H1 (cell line): ENCODE measurements at regions of chr9 and their contacts with region 1.

Region 1: DNA sequence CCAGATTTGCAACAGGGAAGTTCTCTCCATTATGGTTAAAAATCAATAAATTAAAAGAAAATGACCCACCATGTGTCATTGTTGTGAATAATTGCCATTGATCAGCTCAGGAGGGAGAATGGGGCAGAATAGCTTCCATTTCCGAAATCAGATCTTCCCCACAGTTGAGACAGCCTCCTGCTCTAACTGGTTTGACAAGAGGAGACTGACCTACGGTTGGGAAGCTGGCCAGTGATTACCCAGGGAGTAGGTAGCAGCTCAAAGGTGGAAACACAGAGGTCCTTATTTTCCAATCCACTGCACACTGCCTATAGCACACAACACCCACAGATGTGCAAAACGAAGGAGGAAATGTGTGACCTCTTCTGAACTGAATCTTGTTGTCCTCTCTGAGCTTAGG is 69.0 kb upstream of the DAPK1 start:
- DNase-seq: no peak
- H3K4me3 ChIP-seq: no peak overlapping the region
- H3K27ac ChIP-seq: no peak overlapping the region
- H3K4me1 ChIP-seq: peaks cover 0 to 6% (median 2%) of the 10 kb centered on the region in 4 experiments; a peak in 2 of 7 replicates
- H3K27me3 ChIP-seq: no peaks in the 10 kb centered on the region; a peak in 1 of 7 replicates
- CTCF ChIP-seq: no peak
- EP300 ChIP-seq: no peak
- POLR2A ChIP-seq: no peak
- RAD21 ChIP-seq: no peak

Region 2: GRCh38 chr9:87395804-87396479 is 32.7 kb before region 1 on chr9:
- CTCF ChIA-PET with region 1: no interaction called
- POLR2A ChIA-PET with region 1: no interaction called
- DNase-seq: no peak
- H3K4me3 ChIP-seq: no peak overlapping the region
- H3K27ac ChIP-seq: no peak overlapping the region
- H3K4me1 ChIP-seq: peaks cover 0 to 11% (median 8%) of the 10 kb centered on the region in 4 experiments; a peak in 3 of 7 replicates
- H3K27me3 ChIP-seq: no peaks in the 10 kb centered on the region
- CTCF ChIP-seq: no peak
- EP300 ChIP-seq: no peak
- POLR2A ChIP-seq: no peak
- RAD21 ChIP-seq: no peak

Region 3: GRCh38 chr9:87497604-87498045 is 69.0 kb after region 1 on chr9 and contains the start of gene DAPK1:
- CTCF ChIA-PET with region 1: interaction called, 12 read pairs
- POLR2A ChIA-PET with region 1: interaction called, 18 read pairs
- DNase-seq: peak in 1 of 2 experiments; percentile 86
- H3K4me3 ChIP-seq: peak within 1 kb of the TSS; percentile 65 to 83 (median 76)
- H3K27ac ChIP-seq: peak within 1 kb of the TSS; percentile 58; the same call in 1 of the 2 replicates
- H3K4me1 ChIP-seq: peaks cover 0 to 2% (median 0%) of the 10 kb centered on the region in 4 experiments; a peak in 1 of 7 replicates
- H3K27me3 ChIP-seq: no peaks in the 10 kb centered on the region
- CTCF ChIP-seq: peak; percentile 5 to 27 (median 18); a peak in 3 of 4 replicates
- EP300 ChIP-seq: no peak
- POLR2A ChIP-seq: no peak
- RAD21 ChIP-seq: no peak; a peak in 1 of 4 replicates
- total RNA-seq, gene DAPK1: 128 and 131 TPM in 2 replicates